Activated naive CD4-positive, alpha-beta T cell treated with anti-CD3 and anti-CD28 coated beads, Interleukin-2, amount 10 ng/mL, durations not matched to agents 7 days and 5 days (primary cell): ENCODE measurements at regions of chr12 and their contacts with region 1.

Region 1: GRCh38 chr12:51531978-51532497 is 59.0 kb upstream of the SCN8A start:
- DNase-seq: peak; percentile 88
- H3K4me3 Mint-ChIP-seq: no peak overlapping the region
- H3K27ac Mint-ChIP-seq: no peak overlapping the region
- H3K4me1 Mint-ChIP-seq: peaks cover 10% of the 10 kb centered on the region
- H3K27me3 Mint-ChIP-seq: peaks cover 56% of the 10 kb centered on the region

Region 2: DNA sequence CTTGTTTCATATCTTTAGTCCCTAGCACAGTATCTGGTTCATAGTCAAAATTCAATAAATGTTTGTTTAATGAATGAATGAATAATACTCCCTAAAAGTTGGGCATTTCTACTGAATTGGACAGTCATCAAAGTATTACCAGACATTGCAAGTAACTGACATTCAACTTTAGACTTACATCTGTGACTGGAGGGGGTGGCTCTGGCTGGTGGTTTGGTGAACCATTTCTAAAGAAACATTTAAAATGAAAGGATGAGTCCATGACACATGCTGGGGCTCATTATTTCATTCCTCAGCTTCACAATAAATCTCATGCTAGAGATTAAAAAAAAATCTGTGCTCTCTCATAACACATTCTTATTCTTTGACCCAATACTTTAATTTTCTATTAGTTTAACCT is 428.1 kb before region 1 on chr12:
- CTCF ChIA-PET with region 1: no interaction called
- DNase-seq: no peak
- H3K4me3 Mint-ChIP-seq: no peak overlapping the region
- H3K27ac Mint-ChIP-seq: no peak overlapping the region
- H3K4me1 Mint-ChIP-seq: no peaks in the 10 kb centered on the region
- H3K27me3 Mint-ChIP-seq: no peaks in the 10 kb centered on the region

Region 3: DNA sequence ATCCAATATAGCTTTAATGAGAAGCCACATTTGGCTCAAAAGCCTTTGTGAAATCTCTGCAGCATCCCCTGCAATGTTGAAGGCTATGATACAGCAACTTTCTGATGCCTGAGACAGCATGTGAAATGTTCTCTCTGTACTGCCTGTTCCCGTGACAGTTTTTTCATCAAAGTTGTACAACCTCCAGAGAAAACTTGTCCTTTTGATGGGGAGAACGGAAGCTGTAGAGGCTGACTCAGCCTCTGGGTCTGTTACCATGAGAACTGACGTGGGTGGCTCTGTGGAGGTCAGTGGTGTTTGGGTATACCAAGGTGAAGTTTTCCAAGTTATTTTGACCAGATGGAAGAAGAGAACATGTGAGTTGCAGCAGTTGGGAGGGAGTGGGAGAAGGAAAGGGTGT is 90.5 kb before region 1 on chr12:
- CTCF ChIA-PET with region 1: interaction called, 10 read pairs
- DNase-seq: peak; percentile 32
- H3K4me3 Mint-ChIP-seq: no peak overlapping the region
- H3K27ac Mint-ChIP-seq: no peak overlapping the region
- H3K4me1 Mint-ChIP-seq: peaks cover 53% of the 10 kb centered on the region
- H3K27me3 Mint-ChIP-seq: no peaks in the 10 kb centered on the region

Region 4: GRCh38 chr12:51482929-51483697 is 48.9 kb before region 1 on chr12:
- CTCF ChIA-PET with region 1: interaction called, 12 read pairs
- DNase-seq: peak; percentile 70
- H3K4me3 Mint-ChIP-seq: peak overlapping the region; percentile 32
- H3K27ac Mint-ChIP-seq: peak overlapping the region; percentile 90
- H3K4me1 Mint-ChIP-seq: peaks cover 53% of the 10 kb centered on the region
- H3K27me3 Mint-ChIP-seq: no peaks in the 10 kb centered on the region

Region 5: GRCh38 chr12:51505360-51506105 is 26.5 kb before region 1 on chr12:
- CTCF ChIA-PET with region 1: no interaction called
- DNase-seq: no peak
- H3K4me3 Mint-ChIP-seq: no peak overlapping the region
- H3K27ac Mint-ChIP-seq: no peak overlapping the region
- H3K4me1 Mint-ChIP-seq: peaks cover 7% of the 10 kb centered on the region
- H3K27me3 Mint-ChIP-seq: no peaks in the 10 kb centered on the region

Region 6: DNA sequence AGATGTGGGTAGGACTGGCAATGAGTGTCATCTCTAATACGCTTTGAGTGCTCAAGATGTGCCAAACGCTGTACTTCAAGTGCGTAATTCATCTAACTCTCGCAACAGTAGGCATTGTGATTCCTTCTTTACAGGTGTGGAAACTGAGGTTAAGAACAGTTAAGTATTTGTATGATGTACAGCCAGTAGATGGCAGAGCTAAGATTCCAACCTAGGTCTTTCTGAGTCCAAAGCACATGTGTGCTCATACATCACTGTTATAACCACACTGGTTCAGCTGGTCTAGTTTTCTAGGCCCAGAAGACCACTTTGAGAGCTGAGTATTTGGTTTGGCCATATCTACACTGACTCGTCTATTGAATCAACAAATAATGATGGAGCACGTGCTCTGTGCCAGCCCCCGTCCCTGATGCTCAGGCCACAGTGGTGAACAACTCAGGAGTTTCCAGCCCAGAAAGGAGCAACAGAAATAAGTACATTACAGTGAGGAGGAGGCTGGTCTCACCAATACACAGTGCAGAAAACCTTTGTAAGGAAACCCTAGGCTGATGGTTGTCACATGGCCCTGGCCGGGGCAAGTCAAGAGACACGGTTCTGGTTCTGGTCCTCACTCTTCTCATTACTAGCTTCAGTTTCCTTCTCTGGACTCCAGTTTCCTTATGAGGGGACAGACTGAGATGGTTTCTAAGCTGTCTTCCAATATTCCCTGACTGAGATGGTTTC is 10.3 kb before region 1 on chr12:
- CTCF ChIA-PET with region 1: interaction called, 24 read pairs
- DNase-seq: no peak
- H3K4me3 Mint-ChIP-seq: no peak overlapping the region
- H3K27ac Mint-ChIP-seq: no peak overlapping the region
- H3K4me1 Mint-ChIP-seq: no peaks in the 10 kb centered on the region
- H3K27me3 Mint-ChIP-seq: peaks cover 21% of the 10 kb centered on the region